H1 (cell line): ENCODE measurements at regions of chr2 and their contacts with region 1.

Region 1: DNA sequence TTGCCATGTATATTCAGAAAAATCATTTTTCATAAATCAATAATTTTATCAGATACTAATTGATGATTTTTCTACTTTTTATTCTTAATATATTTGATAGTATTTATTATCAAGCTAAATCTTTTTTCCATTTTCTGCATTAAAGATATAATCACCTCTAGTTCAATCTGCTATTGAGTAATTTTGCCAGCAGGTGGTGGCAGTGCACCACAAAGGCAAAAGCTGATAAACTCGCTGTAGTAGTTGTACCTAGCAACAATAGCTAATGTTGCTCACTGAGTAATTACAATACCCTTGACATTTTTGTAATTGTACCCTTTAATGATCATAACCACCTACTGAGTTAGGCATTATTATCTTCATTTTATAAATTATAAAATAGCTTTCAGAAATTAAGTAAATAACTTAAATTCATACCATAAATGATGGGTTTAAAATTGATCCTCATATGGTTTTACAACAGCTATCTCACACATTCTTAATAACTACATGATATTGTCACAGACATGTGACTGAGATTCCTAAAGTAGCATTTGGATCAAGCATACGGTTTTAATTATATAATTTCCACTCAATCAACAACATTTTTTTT is 52.0 kb upstream of the CALCRL start:
- DNase-seq: peak in 1 of 2 experiments; percentile 71
- H3K4me3 ChIP-seq: no peak overlapping the region
- H3K27ac ChIP-seq: no peak overlapping the region
- H3K4me1 ChIP-seq: peaks cover 0 to 6% (median 0%) of the 10 kb centered on the region in 4 experiments; a peak in 1 of 7 replicates
- H3K27me3 ChIP-seq: no peaks in the 10 kb centered on the region
- CTCF ChIP-seq: peak in 2 of 3 experiments; percentile 62 to 90; a peak in 3 of 4 replicates
- EP300 ChIP-seq: no peak
- POLR2A ChIP-seq: no peak
- RAD21 ChIP-seq: peak; percentile 98 to 99

Region 2: GRCh38 chr2:187403568-187404260 is 96.3 kb before region 1 on chr2:
- CTCF ChIA-PET with region 1: no interaction called
- POLR2A ChIA-PET with region 1: no interaction called
- DNase-seq: no peak
- H3K4me3 ChIP-seq: no peak overlapping the region
- H3K27ac ChIP-seq: no peak overlapping the region
- H3K4me1 ChIP-seq: peaks cover 0 to 8% (median 5%) of the 10 kb centered on the region in 4 experiments; a peak in 3 of 7 replicates
- H3K27me3 ChIP-seq: no peaks in the 10 kb centered on the region
- CTCF ChIP-seq: no peak
- EP300 ChIP-seq: no peak
- POLR2A ChIP-seq: no peak
- RAD21 ChIP-seq: no peak

Region 3: GRCh38 chr2:187527262-187527661 is 27.2 kb after region 1 on chr2:
- CTCF ChIA-PET with region 1: interaction called, 16 read pairs
- POLR2A ChIA-PET with region 1: no interaction called
- DNase-seq: no peak
- H3K4me3 ChIP-seq: no peak overlapping the region
- H3K27ac ChIP-seq: no peak overlapping the region
- H3K4me1 ChIP-seq: peaks cover 0 to 2% (median 0%) of the 10 kb centered on the region in 4 experiments; a peak in 1 of 7 replicates
- H3K27me3 ChIP-seq: no peaks in the 10 kb centered on the region
- CTCF ChIP-seq: no peak
- EP300 ChIP-seq: no peak
- POLR2A ChIP-seq: no peak
- RAD21 ChIP-seq: no peak

Region 4: GRCh38 chr2:187567126-187567525 is 67.1 kb after region 1 on chr2:
- CTCF ChIA-PET with region 1: interaction called, 25 read pairs
- POLR2A ChIA-PET with region 1: no interaction called
- DNase-seq: no peak
- H3K4me3 ChIP-seq: no peak overlapping the region
- H3K27ac ChIP-seq: no peak overlapping the region
- H3K4me1 ChIP-seq: peaks cover 0 to 7% (median 0%) of the 10 kb centered on the region in 4 experiments; a peak in 2 of 7 replicates
- H3K27me3 ChIP-seq: no peaks in the 10 kb centered on the region
- CTCF ChIP-seq: no peak
- EP300 ChIP-seq: no peak
- POLR2A ChIP-seq: no peak
- RAD21 ChIP-seq: no peak

Region 5: GRCh38 chr2:187581125-187581896 is 81.3 kb after region 1 on chr2:
- CTCF ChIA-PET with region 1: interaction called, 331 read pairs
- POLR2A ChIA-PET with region 1: no interaction called
- DNase-seq: no peak
- H3K4me3 ChIP-seq: no peak overlapping the region
- H3K27ac ChIP-seq: no peak overlapping the region
- H3K4me1 ChIP-seq: no peaks in the 10 kb centered on the region
- H3K27me3 ChIP-seq: no peaks in the 10 kb centered on the region
- CTCF ChIP-seq: peak in 2 of 3 experiments; percentile 54 to 64; a peak in 2 of 4 replicates
- EP300 ChIP-seq: no peak
- POLR2A ChIP-seq: no peak
- RAD21 ChIP-seq: peak; percentile 61 to 70

Region 6: GRCh38 chr2:187842978-187843847 is 343.2 kb after region 1 on chr2:
- CTCF ChIA-PET with region 1: interaction called, 45 read pairs
- POLR2A ChIA-PET with region 1: no interaction called
- DNase-seq: no peak
- H3K4me3 ChIP-seq: no peak overlapping the region
- H3K27ac ChIP-seq: no peak overlapping the region
- H3K4me1 ChIP-seq: no peaks in the 10 kb centered on the region
- H3K27me3 ChIP-seq: peaks cover 0 to 1% (median 0%) of the 10 kb centered on the region in 4 experiments; a peak in 1 of 7 replicates
- CTCF ChIP-seq: peak in 2 of 3 experiments; percentile 58 to 64; a peak in 3 of 4 replicates
- EP300 ChIP-seq: no peak
- POLR2A ChIP-seq: no peak
- RAD21 ChIP-seq: peak; percentile 85 to 87